GM10248 (cell line): ENCODE measurements at regions of chr1 and their contacts with region 1.

Region 1: GRCh38 chr1:221246628-221247415 is 367.6 kb downstream of the HLX start:
- DNase-seq: no peak
- CTCF ChIP-seq: no peak

Region 2: GRCh38 chr1:221230605-221231004 is 16.2 kb before region 1 on chr1:
- CTCF ChIA-PET with region 1: no interaction called
- POLR2A ChIA-PET with region 1: no interaction called
- DNase-seq: no peak
- CTCF ChIP-seq: no peak

Region 3: DNA sequence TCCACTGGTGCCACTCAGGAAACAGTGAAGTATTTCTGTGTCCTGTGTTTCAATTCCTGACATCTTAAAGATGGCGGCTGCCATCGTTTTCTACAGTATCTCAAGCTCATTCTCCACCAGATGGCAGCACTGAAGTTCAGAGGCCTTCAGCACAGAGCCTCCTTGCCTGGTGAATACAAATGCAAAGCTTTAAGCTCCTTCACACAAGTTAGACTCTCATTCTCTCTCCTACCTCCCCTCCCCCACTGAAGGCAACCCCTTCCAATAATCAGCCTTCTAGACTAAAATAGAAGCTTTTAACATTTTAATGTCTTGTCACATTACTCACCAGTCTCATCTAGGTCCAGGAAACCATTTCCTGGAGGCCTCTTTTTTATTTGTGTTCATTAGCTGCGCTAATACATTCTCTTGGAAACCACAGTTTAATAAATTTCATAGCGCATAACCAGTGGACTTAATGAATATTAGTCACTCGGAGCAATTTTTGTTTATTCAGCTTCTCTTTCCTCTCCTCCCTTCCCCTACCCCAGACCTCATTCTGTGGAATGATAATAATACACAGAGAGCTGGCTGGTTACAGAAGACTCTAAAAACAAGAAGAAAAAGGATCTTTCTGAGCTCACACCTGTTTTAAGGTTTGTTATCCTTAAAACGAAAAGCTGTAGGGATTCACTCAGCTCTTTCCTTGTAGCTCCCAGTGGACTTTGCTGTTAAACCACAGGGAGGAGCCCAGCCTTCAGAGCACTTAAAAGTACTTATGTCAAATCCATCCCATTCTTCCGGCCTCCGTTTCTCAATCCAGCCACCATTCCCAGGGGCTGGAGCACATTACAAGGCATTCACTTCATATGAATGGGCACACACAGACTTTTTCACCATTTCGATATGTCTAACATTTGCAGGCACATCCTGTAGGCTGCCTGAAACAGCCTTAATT is 17.3 kb after region 1 on chr1:
- CTCF ChIA-PET with region 1: interaction called, 19 read pairs
- POLR2A ChIA-PET with region 1: no interaction called
- DNase-seq: peak; percentile 42
- CTCF ChIP-seq: peak; percentile 37